ENCODE measurements at regions of chr17 and their contacts with region 1.

Region 1: GRCh38 chr17:2786176-2786881 is 9.9 kb upstream of the RAP1GAP2 start:
- DNase-seq: peak; percentile 91
- H3K4me3 Mint-ChIP-seq: no peak overlapping the region
- H3K27ac Mint-ChIP-seq: no peak overlapping the region
- H3K4me1 Mint-ChIP-seq: peaks cover 25% of the 10 kb centered on the region
- H3K27me3 Mint-ChIP-seq: peaks cover 23% of the 10 kb centered on the region

Region 2: GRCh38 chr17:2680961-2681360 is 105.4 kb before region 1 on chr17:
- CTCF ChIA-PET with region 1: no interaction called
- POLR2A ChIA-PET with region 1: no interaction called
- DNase-seq: no peak
- H3K4me3 Mint-ChIP-seq: no peak overlapping the region
- H3K27ac Mint-ChIP-seq: no peak overlapping the region
- H3K4me1 Mint-ChIP-seq: no peaks in the 10 kb centered on the region
- H3K27me3 Mint-ChIP-seq: no peaks in the 10 kb centered on the region

Region 3: GRCh38 chr17:2711601-2712299 is 74.6 kb before region 1 on chr17 and contains the start of gene CLUH:
- CTCF ChIA-PET with region 1: no interaction called
- POLR2A ChIA-PET with region 1: no interaction called
- DNase-seq: peak; percentile 95
- H3K4me3 Mint-ChIP-seq: peak within 1 kb of the TSS; percentile 86
- H3K27ac Mint-ChIP-seq: peak within 1 kb of the TSS; percentile 95
- H3K4me1 Mint-ChIP-seq: peaks cover 41% of the 10 kb centered on the region
- H3K27me3 Mint-ChIP-seq: no peaks in the 10 kb centered on the region
- total RNA-seq, gene CLUH: 44.8 to 55.9 TPM

Region 4: DNA sequence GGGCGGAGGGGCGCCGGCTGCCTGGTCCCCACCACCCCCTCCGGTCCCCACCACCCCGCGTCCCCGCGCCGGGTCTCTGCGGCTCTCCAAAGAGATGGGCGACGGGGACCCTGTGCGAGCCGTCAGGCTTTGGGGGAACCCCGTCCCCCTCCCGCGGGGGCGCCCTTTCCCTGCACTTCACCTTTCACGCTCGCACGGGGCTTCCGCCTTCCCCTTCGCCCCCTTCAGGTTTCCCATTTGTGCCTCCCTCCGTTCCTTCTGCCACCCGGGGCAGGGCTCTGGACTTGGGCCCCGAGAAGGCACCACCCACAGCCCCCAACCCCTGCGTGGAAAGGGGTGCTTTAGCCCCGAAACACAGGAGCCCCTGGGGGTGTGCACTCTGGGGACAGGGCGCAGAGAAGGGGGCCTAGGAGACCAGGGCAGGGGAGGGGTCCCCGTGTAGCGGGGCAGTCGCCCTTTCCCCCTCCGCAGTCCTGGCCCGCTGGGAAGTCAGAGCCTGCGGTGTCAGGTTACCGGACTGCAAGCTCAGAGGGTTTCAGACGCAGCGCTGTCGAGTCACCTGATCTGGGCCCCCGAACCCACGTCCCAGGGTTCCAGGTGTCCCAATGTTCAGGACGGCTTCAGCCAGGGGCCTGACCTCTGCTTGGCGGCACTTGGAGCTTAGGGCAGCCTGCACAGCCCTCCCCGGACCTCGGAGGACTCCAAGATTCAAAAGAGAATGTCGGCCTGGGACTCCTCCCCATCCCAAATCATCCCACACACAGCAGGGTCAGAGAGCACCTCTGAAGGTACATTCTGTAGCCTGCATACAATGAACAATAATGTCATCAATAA is 30.2 kb before region 1 on chr17:
- CTCF ChIA-PET with region 1: no interaction called
- POLR2A ChIA-PET with region 1: interaction called, 22 read pairs
- DNase-seq: no peak
- H3K4me3 Mint-ChIP-seq: peak overlapping the region; percentile 32
- H3K27ac Mint-ChIP-seq: no peak overlapping the region
- H3K4me1 Mint-ChIP-seq: no peaks in the 10 kb centered on the region
- H3K27me3 Mint-ChIP-seq: peaks cover 47% of the 10 kb centered on the region

Region 5: GRCh38 chr17:2796164-2797125 is 10.1 kb after region 1 on chr17 and contains the start of gene RAP1GAP2:
- CTCF ChIA-PET with region 1: interaction called, 11 read pairs
- POLR2A ChIA-PET with region 1: interaction called, 3 read pairs
- DNase-seq: peak; percentile 89
- H3K4me3 Mint-ChIP-seq: peak within 1 kb of the TSS; percentile 88
- H3K27ac Mint-ChIP-seq: peak within 1 kb of the TSS; percentile 65
- H3K4me1 Mint-ChIP-seq: peaks cover 78% of the 10 kb centered on the region
- H3K27me3 Mint-ChIP-seq: peaks cover 12% of the 10 kb centered on the region
- total RNA-seq, gene RAP1GAP2: 27.8 to 37.3 TPM

Region 6: GRCh38 chr17:2814481-2815341 is 28.4 kb after region 1 on chr17:
- CTCF ChIA-PET with region 1: interaction called, 11 read pairs
- POLR2A ChIA-PET with region 1: interaction called, 3 read pairs
- DNase-seq: peak; percentile 97
- H3K4me3 Mint-ChIP-seq: peak overlapping the region; percentile 70
- H3K27ac Mint-ChIP-seq: peak overlapping the region; percentile 93
- H3K4me1 Mint-ChIP-seq: peaks cover 46% of the 10 kb centered on the region
- H3K27me3 Mint-ChIP-seq: peaks cover 27% of the 10 kb centered on the region

Region 7: DNA sequence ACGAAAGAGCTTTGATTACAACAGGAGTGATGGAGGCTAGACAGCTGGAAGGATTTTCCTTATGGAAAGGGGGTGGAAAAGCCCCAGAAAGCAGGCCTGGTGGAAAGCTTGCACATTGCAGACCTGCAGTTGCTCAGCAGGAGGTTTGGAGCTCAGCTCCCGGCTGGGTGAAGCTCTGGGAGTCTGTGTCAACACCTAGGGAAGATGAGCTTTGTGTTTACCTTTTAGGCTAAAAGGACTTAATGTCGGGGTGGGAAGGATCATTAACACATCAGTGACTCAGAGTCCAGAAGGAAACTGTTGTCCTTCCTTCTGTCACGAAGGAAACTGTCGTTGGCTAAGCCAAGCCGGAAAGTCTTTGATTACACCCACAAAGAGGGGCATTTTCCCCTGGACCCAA is 58.1 kb after region 1 on chr17:
- CTCF ChIA-PET with region 1: no interaction called
- POLR2A ChIA-PET with region 1: no interaction called
- DNase-seq: no peak
- H3K4me3 Mint-ChIP-seq: no peak overlapping the region
- H3K27ac Mint-ChIP-seq: no peak overlapping the region
- H3K4me1 Mint-ChIP-seq: peaks cover 15% of the 10 kb centered on the region
- H3K27me3 Mint-ChIP-seq: peaks cover 5% of the 10 kb centered on the region